Activated B cell treated with CpG ODN at 0.5 μM for 24 hours (primary cell): ENCODE measurements at regions of chr2 and their contacts with region 1.

Region 1: GRCh38 chr2:179422037-179422643 is 157.5 kb upstream of the SESTD1 start:
- DNase-seq: peak; percentile 19
- ATAC-seq: peak; percentile 66
- H3K4me3 Mint-ChIP-seq: no peak overlapping the region
- H3K27ac Mint-ChIP-seq: no peak overlapping the region
- H3K4me1 Mint-ChIP-seq: no peaks in the 10 kb centered on the region
- H3K27me3 Mint-ChIP-seq: peaks cover 9% of the 10 kb centered on the region
- CTCF ChIP-seq: peak; percentile 40

Region 2: GRCh38 chr2:179432751-179433150 is 10.6 kb after region 1 on chr2:
- CTCF ChIA-PET with region 1: interaction called, 10 read pairs
- POLR2A ChIA-PET with region 1: no interaction called
- intact Hi-C with region 1: no loop called
- DNase-seq: no peak
- ATAC-seq: no peak
- H3K4me3 Mint-ChIP-seq: no peak overlapping the region
- H3K27ac Mint-ChIP-seq: no peak overlapping the region
- H3K4me1 Mint-ChIP-seq: no peaks in the 10 kb centered on the region
- H3K27me3 Mint-ChIP-seq: peaks cover 15% of the 10 kb centered on the region
- CTCF ChIP-seq: no peak

Region 3: GRCh38 chr2:179936654-179937053 is 514.5 kb after region 1 on chr2:
- CTCF ChIA-PET with region 1: no interaction called
- POLR2A ChIA-PET with region 1: no interaction called
- intact Hi-C with region 1: loop called (anchors 2 kb)
- DNase-seq: no peak
- ATAC-seq: no peak
- H3K4me3 Mint-ChIP-seq: no peak overlapping the region
- H3K27ac Mint-ChIP-seq: no peak overlapping the region
- H3K4me1 Mint-ChIP-seq: no peaks in the 10 kb centered on the region
- H3K27me3 Mint-ChIP-seq: no peaks in the 10 kb centered on the region
- CTCF ChIP-seq: no peak